K562 (cell line): ENCODE measurements at regions of chr13 and their contacts with region 1.

Region 1: DNA sequence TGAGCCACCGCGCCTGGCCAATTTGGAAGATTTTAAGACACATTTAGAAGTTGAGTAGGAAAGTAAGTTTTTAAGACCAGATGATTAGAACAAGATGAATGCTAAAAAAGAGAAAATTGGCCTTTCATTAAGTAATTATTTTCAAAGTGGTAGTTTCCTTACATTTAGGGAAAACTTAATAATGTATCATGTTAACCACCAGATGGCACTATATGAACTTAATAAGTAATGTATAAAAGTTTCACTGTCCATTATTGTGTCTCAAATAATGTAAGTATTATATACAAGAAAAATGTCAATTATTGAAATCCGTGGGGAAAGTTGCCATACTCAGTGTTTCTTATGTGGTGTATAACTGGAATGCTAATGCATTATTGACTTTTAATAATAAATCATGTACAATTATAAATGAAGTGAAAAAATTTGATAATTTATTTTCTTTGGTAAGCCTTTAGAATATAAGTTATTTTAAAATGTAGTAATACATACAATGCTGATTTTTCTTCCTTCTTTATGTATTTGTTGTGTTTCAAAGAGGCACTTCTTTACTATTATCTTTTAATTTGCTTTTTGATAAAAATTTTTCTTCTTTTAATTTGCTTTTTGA is 29.2 kb downstream of the COG6 start:
- DNase-seq: peak in 2 of 4 experiments; percentile 3 to 5
- ATAC-seq: no peak
- H3K4me3 ChIP-seq: no peak overlapping the region
- H3K27ac ChIP-seq: no peak overlapping the region
- H3K4me1 ChIP-seq: no peaks in the 10 kb centered on the region
- H3K27me3 ChIP-seq: no peaks in the 10 kb centered on the region
- CTCF ChIP-seq: peak in 1 of 3 experiments; percentile 34; a peak in 2 of 6 replicates
- EP300 ChIP-seq: no peak
- POLR2A ChIP-seq: no peak
- RAD21 ChIP-seq: peak in 1 of 2 experiments; percentile 42; a peak in 2 of 4 replicates

Region 2: DNA sequence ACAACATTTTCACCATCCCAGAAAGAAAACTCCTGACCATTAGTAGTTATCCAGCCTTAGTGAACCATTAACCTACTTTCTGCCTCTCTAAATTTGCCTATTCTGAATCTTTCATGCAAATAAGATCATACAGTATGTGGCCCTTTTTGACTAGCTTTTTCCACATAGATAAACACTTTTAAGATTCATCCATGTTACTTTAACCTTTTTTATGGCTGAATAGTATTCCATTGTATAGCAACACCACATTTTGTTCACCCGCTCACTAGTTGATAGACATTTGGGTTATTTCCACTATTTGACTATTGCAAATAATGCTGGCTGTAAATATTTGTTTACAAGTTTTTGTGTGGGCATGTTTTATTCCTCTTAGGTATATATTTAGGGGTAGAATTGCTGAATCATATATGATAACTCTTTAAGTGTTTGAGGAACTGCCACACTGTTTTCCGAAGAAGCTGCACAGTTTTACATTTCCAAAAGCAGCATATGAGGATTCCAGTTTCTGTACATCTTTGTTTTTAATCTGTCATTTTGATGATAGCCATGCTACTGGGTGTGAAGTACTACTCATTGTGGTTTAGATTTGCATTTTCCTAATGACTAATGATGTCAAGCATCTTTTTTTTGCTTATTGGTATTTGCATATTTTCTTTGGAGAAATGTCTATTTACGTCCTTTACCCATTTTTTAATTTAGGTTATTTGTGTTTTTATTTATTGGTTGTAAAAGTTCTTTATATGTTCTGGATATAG is 12.1 kb before region 1 on chr13:
- CTCF ChIA-PET with region 1: no interaction called
- POLR2A ChIA-PET with region 1: no interaction called
- in situ Hi-C with region 1: no loop called
- intact Hi-C with region 1: no loop called
- DNase-seq: no peak
- ATAC-seq: no peak
- H3K4me3 ChIP-seq: no peak overlapping the region
- H3K27ac ChIP-seq: no peak overlapping the region
- H3K4me1 ChIP-seq: no peaks in the 10 kb centered on the region
- H3K27me3 ChIP-seq: no peaks in the 10 kb centered on the region
- CTCF ChIP-seq: no peak
- EP300 ChIP-seq: no peak
- POLR2A ChIP-seq: no peak
- RAD21 ChIP-seq: no peak

Region 3: GRCh38 chr13:39942552-39943273 is 258.1 kb after region 1 on chr13:
- CTCF ChIA-PET with region 1: no interaction called
- POLR2A ChIA-PET with region 1: no interaction called
- in situ Hi-C with region 1: no loop called
- intact Hi-C with region 1: loop called (anchors 5 kb)
- DNase-seq: peak; percentile 26 to 62 (median 46)
- ATAC-seq: peak; percentile 99
- H3K4me3 ChIP-seq: no peak overlapping the region
- H3K27ac ChIP-seq: no peak overlapping the region
- H3K4me1 ChIP-seq: no peaks in the 10 kb centered on the region
- H3K27me3 ChIP-seq: no peaks in the 10 kb centered on the region
- CTCF ChIP-seq: peak; percentile 94 to 100 (median 100)
- EP300 ChIP-seq: no peak
- POLR2A ChIP-seq: no peak
- RAD21 ChIP-seq: peak; percentile 50 to 72